IMR-90 (cell line): ENCODE measurements at regions of chr17 and their contacts with region 1.

Region 1: DNA sequence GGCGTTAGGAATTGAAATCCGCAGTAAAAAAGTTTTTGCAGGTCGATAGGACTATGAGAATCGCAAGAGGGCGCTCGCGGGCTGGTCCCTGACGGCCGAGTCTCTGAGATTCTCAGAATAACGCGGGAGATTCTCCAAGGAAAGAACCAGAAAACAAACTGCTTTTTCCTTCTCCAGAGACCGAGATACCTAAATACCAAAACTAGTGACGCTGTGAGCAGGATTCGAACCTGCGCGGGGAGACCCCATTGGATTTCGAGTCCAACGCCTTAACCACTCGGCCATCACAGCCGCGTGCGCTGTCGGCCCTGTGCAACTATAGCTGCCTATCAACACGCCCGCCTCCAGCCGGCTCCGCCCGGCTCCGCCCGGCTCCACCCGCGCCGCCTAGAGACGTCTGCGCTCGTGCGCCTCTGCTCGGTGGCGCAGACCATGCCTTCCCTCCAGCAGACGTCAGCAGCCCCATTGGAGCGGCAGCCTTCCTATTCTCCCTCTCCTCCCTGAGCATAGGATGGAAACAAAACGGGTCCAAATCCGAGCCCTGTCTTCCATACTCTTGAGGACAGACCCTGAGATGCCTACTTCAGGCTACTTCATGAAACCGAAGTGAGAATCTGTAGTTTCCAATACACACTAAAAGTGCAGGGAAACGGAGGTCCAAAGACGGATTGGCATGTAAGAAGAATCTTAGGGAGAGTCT is 13.4 kb downstream of the PER1 start:
- DNase-seq: peak; percentile 98
- ATAC-seq: peak; percentile 86
- H3K4me3 ChIP-seq: peak overlapping the region; percentile 55
- H3K27ac ChIP-seq: peak overlapping the region; percentile 3; the same call in 1 of the 2 replicates
- H3K4me1 ChIP-seq: peaks cover 4% of the 10 kb centered on the region
- H3K27me3 ChIP-seq: no peaks in the 10 kb centered on the region
- CTCF ChIP-seq: peak; percentile 95
- POLR2A ChIP-seq: peak; percentile 91
- RAD21 ChIP-seq: peak; percentile 70

Region 2: GRCh38 chr17:8125157-8125946 is 13.5 kb before region 1 on chr17:
- CTCF ChIA-PET with region 1: interaction called, 24 read pairs
- POLR2A ChIA-PET with region 1: no interaction called
- dilution Hi-C with region 1: no loop called
- in situ Hi-C with region 1: no loop called
- intact Hi-C with region 1: loop called (anchors 1 kb)
- DNase-seq: peak; percentile 60
- ATAC-seq: peak; percentile 5
- H3K4me3 ChIP-seq: peak overlapping the region; percentile 73
- H3K27ac ChIP-seq: no peak overlapping the region
- H3K4me1 ChIP-seq: peaks cover 8% of the 10 kb centered on the region
- H3K27me3 ChIP-seq: no peaks in the 10 kb centered on the region
- CTCF ChIP-seq: no peak
- POLR2A ChIP-seq: no peak
- RAD21 ChIP-seq: no peak

Region 3: GRCh38 chr17:8156246-8156992 is 17.6 kb after region 1 on chr17:
- CTCF ChIA-PET with region 1: interaction called, 7 read pairs
- POLR2A ChIA-PET with region 1: no interaction called
- dilution Hi-C with region 1: no loop called
- in situ Hi-C with region 1: no loop called
- intact Hi-C with region 1: loop called (anchors 1 kb)
- DNase-seq: peak; percentile 100
- ATAC-seq: peak; percentile 69
- H3K4me3 ChIP-seq: peak overlapping the region; percentile 69
- H3K27ac ChIP-seq: peak overlapping the region; percentile 63
- H3K4me1 ChIP-seq: peaks cover 22% of the 10 kb centered on the region
- H3K27me3 ChIP-seq: no peaks in the 10 kb centered on the region
- CTCF ChIP-seq: 0 out of 2 replicates have a peak, but pooled peaks have one; percentile 26
- POLR2A ChIP-seq: peak; percentile 98
- RAD21 ChIP-seq: peak; percentile 44

Region 4: DNA sequence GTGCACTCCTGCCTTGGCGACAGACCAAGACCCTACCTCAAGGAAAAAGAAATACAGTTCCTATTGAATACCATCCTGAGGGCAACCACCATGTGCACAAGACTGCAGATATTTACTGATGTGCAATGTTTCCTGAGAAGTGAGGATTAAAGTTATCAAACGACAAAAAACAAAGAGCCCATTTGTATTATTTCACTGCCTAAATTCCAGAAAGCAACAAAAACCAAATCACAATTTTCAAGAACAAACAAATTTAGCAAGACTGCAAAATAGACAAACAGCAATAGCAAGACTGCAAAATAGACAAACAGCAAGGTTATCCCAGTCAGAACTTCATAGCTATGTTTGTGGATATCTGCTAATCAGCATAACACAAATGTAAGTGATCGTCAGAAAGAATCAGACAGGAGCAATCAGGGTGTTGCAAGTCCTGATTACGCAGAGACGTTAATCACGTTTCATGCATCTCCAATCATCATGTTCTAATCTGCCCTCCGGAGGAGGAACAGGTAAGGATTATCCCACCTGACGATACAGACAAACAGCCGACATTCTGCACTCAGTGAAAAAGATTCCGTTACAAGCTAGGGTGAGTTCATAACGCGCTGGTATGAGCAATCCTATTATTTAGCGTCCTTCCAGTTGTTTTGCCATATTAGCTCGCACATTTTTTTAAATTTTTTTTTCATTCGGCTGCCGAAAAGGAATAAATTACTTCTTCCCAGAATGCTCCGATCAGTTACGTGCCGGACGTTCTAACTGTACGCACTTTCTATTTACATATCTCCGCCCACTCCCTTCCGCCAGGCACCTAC is 34.4 kb after region 1 on chr17:
- CTCF ChIA-PET with region 1: no interaction called
- POLR2A ChIA-PET with region 1: interaction called, 3 read pairs
- dilution Hi-C with region 1: no loop called
- in situ Hi-C with region 1: no loop called
- intact Hi-C with region 1: loop called (anchors 1 kb)
- DNase-seq: peak; percentile 99
- ATAC-seq: peak; percentile 84
- H3K4me3 ChIP-seq: peak overlapping the region; percentile 51
- H3K27ac ChIP-seq: peak overlapping the region; percentile 85
- H3K4me1 ChIP-seq: peaks cover 12% of the 10 kb centered on the region
- H3K27me3 ChIP-seq: no peaks in the 10 kb centered on the region
- CTCF ChIP-seq: no peak
- POLR2A ChIP-seq: peak; percentile 100
- RAD21 ChIP-seq: no peak

Region 5: GRCh38 chr17:8300627-8301242 is 161.9 kb after region 1 on chr17:
- CTCF ChIA-PET with region 1: no interaction called
- POLR2A ChIA-PET with region 1: no interaction called
- dilution Hi-C with region 1: no loop called
- in situ Hi-C with region 1: no loop called
- intact Hi-C with region 1: loop called (anchors 1 kb)
- DNase-seq: peak; percentile 64
- ATAC-seq: peak; percentile 98
- H3K4me3 ChIP-seq: no peak overlapping the region
- H3K27ac ChIP-seq: no peak overlapping the region
- H3K4me1 ChIP-seq: no peaks in the 10 kb centered on the region
- H3K27me3 ChIP-seq: no peaks in the 10 kb centered on the region; the same call in 1 of the 2 replicates
- CTCF ChIP-seq: peak; percentile 80
- POLR2A ChIP-seq: no peak
- RAD21 ChIP-seq: peak; percentile 86